A549 (cell line): ENCODE measurements at regions of chr1 and their contacts with region 1.

Region 1: GRCh38 chr1:170967042-170967910 is 31.9 kb downstream of the MROH9 start:
- DNase-seq: peak; percentile 10 to 33
- ATAC-seq: peak; percentile 59 to 82; a peak in 4 of 6 replicates
- H3K4me3 ChIP-seq: no peak overlapping the region
- H3K27ac ChIP-seq: no peak overlapping the region
- H3K4me1 ChIP-seq: no peaks in the 10 kb centered on the region
- CTCF ChIP-seq: peak; percentile 42
- EP300 ChIP-seq: no peak
- POLR2A ChIP-seq: no peak
- RAD21 ChIP-seq: peak; percentile 24 to 51; a peak in 2 of 5 replicates

Region 2: DNA sequence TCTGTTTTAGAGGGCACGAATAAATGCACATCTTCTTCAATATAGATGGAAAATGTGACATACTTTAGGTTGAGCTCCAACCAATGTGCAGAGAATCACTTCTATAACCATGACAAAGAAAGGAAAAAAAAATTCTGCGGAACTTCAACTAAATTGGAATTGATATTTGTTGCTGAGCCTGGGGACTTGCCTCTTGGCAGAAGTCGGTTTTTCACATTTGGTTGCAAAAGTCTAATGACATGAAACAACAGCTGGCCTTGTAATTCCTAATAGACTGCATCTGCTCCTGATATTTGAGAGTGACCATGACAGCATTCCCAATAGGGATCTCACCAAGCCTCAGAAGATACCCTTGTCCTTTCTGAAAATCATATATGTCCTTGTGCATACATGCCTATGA is 190.5 kb before region 1 on chr1:
- CTCF ChIA-PET with region 1: no interaction called
- POLR2A ChIA-PET with region 1: no interaction called
- DNase-seq: no peak
- ATAC-seq: no peak
- H3K4me3 ChIP-seq: no peak overlapping the region
- H3K27ac ChIP-seq: no peak overlapping the region
- H3K4me1 ChIP-seq: no peaks in the 10 kb centered on the region
- CTCF ChIP-seq: no peak
- EP300 ChIP-seq: no peak
- POLR2A ChIP-seq: no peak
- RAD21 ChIP-seq: no peak

Region 3: GRCh38 chr1:171226747-171227370 is 259.6 kb after region 1 on chr1:
- CTCF ChIA-PET with region 1: interaction called, 24 read pairs
- POLR2A ChIA-PET with region 1: no interaction called
- DNase-seq: peak; percentile 43 to 60
- ATAC-seq: peak; percentile 85 to 92
- H3K4me3 ChIP-seq: no peak overlapping the region
- H3K27ac ChIP-seq: no peak overlapping the region
- H3K4me1 ChIP-seq: no peaks in the 10 kb centered on the region
- CTCF ChIP-seq: peak; percentile 61
- EP300 ChIP-seq: no peak
- POLR2A ChIP-seq: no peak
- RAD21 ChIP-seq: peak; percentile 62 to 68